ENCODE measurements at regions of chr19 and their contacts with region 1.

Region 1: GRCh38 chr19:47081111-47081510 is 32.5 kb downstream of the ZC3H4 start:
- DNase-seq: no peak
- H3K4me3 ChIP-seq: no peak overlapping the region
- H3K27ac ChIP-seq: no peak overlapping the region
- H3K4me1 ChIP-seq: peaks cover 2% of the 10 kb centered on the region
- H3K27me3 ChIP-seq: no peaks in the 10 kb centered on the region
- CTCF ChIP-seq: no peak

Region 2: GRCh38 chr19:46998445-46999125 is 82.5 kb before region 1 on chr19:
- CTCF ChIA-PET with region 1: no interaction called
- dilution Hi-C with region 1: loop called (anchors 5 kb)
- in situ Hi-C with region 1: no loop called
- intact Hi-C with region 1: no loop called
- DNase-seq: no peak
- H3K4me3 ChIP-seq: no peak overlapping the region
- H3K27ac ChIP-seq: no peak overlapping the region
- H3K4me1 ChIP-seq: no peaks in the 10 kb centered on the region
- H3K27me3 ChIP-seq: no peaks in the 10 kb centered on the region
- CTCF ChIP-seq: no peak

Region 3: GRCh38 chr19:47035127-47036096 is 45.7 kb before region 1 on chr19:
- CTCF ChIA-PET with region 1: no interaction called
- dilution Hi-C with region 1: loop called (anchors 5 kb)
- in situ Hi-C with region 1: no loop called
- intact Hi-C with region 1: no loop called
- DNase-seq: peak; percentile 90
- H3K4me3 ChIP-seq: peak overlapping the region; percentile 47 to 79 (median 53)
- H3K27ac ChIP-seq: peak overlapping the region; percentile 68
- H3K4me1 ChIP-seq: peaks cover 14% of the 10 kb centered on the region
- H3K27me3 ChIP-seq: no peaks in the 10 kb centered on the region
- CTCF ChIP-seq: peak; percentile 80 to 94

Region 4: DNA sequence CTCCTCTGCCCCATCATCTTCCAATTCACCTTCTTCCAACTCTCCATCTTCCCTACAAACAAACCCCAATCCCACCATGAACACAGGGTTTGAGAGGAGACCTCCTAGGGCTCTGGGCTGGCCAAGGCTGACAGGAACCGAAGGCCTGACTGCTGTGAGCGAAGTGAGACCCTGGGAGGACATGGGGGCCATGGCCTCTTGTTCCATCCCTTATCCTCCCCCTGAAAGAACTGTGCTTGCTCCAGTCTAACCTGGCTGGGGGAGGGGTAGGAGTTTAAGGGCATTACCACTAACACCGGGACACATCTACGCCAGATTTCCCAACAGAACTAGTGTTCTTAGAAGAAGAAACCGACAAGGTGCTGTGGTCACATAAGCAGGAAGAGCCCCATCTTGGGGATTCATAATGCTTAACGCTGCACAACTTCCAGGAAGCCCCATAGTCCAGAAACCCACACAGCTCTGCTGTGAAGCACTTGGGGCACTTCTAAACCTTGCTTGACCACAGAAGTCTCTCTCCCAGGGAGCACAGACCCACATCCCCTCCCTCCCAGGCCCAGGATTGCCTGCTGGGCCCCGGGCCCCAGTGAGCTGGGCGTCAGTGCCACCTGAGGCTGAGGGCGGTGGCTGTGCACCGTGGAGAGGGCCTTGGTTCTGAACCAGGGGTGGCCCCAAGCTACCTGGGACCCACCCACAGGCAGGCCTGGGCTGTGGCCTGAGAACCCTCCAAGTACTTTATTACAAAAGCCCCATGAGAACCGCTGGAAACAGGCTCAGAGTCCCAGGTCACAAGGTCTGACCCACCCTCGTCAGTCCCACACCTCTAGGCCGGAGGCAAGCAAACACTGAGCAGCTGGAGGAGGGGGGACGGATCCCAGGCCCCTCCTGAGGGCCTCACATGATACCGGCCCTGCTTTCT is 13.7 kb after region 1 on chr19:
- CTCF ChIA-PET with region 1: no interaction called
- dilution Hi-C with region 1: no loop called
- in situ Hi-C with region 1: no loop called
- intact Hi-C with region 1: no loop called
- DNase-seq: no peak
- H3K4me3 ChIP-seq: no peak overlapping the region
- H3K27ac ChIP-seq: peak overlapping the region; percentile 62
- H3K4me1 ChIP-seq: peaks cover 35% of the 10 kb centered on the region
- H3K27me3 ChIP-seq: no peaks in the 10 kb centered on the region
- CTCF ChIP-seq: no peak

Region 5: GRCh38 chr19:47152224-47153017 is 71.3 kb after region 1 on chr19:
- CTCF ChIA-PET with region 1: no interaction called
- dilution Hi-C with region 1: loop called (anchors 5 kb)
- in situ Hi-C with region 1: no loop called
- intact Hi-C with region 1: no loop called
- DNase-seq: peak; percentile 89
- H3K4me3 ChIP-seq: no peak overlapping the region
- H3K27ac ChIP-seq: peak overlapping the region; percentile 11
- H3K4me1 ChIP-seq: peaks cover 28% of the 10 kb centered on the region
- H3K27me3 ChIP-seq: no peaks in the 10 kb centered on the region
- CTCF ChIP-seq: no peak